Pancreas (tissue), 10 donors: ENCODE measurements at regions of chr12 and their contacts with region 1.

Region 1: GRCh38 chr12:26989873-26990272 is 24.3 kb downstream of the TM7SF3 start:
- DNase-seq: no peak
- ATAC-seq: no peak
- H3K4me3 ChIP-seq: no peak overlapping the region
- H3K27ac ChIP-seq: no peak overlapping the region
- H3K4me1 ChIP-seq: no peaks in the 10 kb centered on the region
- H3K27me3 ChIP-seq: no peaks in the 10 kb centered on the region
- CTCF ChIP-seq: no peak

Region 2: DNA sequence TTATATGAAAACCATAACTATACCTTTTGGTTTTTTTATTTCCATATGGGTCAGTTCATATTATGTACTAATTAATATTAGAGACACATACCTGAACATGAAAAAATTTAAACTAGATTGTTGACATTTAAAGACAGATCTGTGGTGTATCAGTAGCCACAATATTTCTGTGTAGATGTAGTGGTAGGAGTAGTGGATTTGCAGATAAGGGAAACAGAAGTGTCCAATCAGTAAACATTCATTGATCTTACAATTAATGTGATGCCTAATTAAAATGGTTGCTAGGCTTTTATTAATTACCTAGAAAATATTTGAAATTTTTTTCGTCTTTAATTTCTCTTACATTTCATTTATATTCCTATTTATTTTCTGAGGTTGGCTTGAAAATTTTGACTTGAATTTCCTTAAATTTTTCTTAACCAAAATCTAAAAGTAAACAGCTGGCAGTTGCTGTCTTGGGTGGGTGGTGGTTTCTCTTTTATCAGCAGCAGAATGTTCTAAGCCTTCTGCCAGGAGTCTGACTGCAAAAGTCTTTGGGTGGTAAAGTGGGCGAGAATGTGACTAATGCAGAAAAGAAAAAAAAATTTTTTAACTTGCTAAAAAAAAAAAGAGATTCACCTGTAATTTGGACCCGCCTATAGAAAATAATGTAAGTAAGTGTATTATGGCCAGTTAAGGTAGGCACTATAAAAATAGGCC is 49.2 kb before region 1 on chr12:
- intact Hi-C with region 1: loop called in 2 of 3 experiments (anchors 10 kb)
- DNase-seq: no peak
- ATAC-seq: no peak
- H3K4me3 ChIP-seq: no peak overlapping the region
- H3K27ac ChIP-seq: no peak overlapping the region
- H3K4me1 ChIP-seq: peaks cover 21 to 36% (median 34%) of the 10 kb centered on the region in 3 donors
- H3K27me3 ChIP-seq: no peaks in the 10 kb centered on the region
- CTCF ChIP-seq: no peak

Region 3: DNA sequence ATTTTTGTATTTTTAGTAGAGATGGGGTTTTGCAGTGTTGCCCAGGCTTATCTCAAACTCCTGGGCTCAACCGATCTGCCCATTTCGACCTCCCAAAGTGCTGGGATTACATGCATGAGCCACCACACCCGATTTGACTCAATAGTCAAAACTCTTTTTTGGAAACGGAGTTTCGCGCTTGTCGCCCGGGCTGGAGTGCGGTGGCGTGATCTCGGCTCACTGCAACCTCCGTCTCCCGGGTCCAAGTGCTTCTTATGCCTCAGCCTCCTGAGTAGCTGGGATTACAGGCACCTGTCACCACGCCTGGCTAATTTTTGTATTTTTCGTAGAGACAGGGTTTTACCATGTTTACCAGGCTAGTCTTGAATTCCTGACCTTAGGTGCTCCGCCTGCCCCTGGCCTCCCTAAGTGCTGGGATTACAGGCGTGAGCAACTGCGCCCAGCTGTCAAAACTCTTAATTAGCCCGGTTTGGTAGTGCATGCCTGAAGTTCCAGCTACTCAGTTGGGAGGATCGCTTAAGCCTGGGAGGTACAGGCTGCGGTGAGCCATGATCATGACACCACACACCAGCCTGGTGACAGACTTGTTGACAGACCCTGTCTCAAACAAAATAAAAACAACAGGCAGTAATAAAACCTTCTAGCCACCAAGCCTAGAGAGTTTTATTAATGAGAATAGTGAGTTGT is 44.9 kb after region 1 on chr12:
- intact Hi-C with region 1: no loop called
- DNase-seq: no peak
- ATAC-seq: no peak
- H3K4me3 ChIP-seq: no peak overlapping the region
- H3K27ac ChIP-seq: no peak overlapping the region
- H3K4me1 ChIP-seq: no peaks in the 10 kb centered on the region
- H3K27me3 ChIP-seq: no peaks in the 10 kb centered on the region
- CTCF ChIP-seq: no peak

Region 4: GRCh38 chr12:27083861-27084394 is 94.1 kb after region 1 on chr12:
- intact Hi-C with region 1: no loop called
- DNase-seq: no peak
- ATAC-seq: no peak
- H3K4me3 ChIP-seq: no peak overlapping the region
- H3K27ac ChIP-seq: no peak overlapping the region
- H3K4me1 ChIP-seq: no peaks in the 10 kb centered on the region
- H3K27me3 ChIP-seq: no peaks in the 10 kb centered on the region
- CTCF ChIP-seq: no peak